ENCODE measurements at regions of chr19 and their contacts with region 1.

Region 1: DNA sequence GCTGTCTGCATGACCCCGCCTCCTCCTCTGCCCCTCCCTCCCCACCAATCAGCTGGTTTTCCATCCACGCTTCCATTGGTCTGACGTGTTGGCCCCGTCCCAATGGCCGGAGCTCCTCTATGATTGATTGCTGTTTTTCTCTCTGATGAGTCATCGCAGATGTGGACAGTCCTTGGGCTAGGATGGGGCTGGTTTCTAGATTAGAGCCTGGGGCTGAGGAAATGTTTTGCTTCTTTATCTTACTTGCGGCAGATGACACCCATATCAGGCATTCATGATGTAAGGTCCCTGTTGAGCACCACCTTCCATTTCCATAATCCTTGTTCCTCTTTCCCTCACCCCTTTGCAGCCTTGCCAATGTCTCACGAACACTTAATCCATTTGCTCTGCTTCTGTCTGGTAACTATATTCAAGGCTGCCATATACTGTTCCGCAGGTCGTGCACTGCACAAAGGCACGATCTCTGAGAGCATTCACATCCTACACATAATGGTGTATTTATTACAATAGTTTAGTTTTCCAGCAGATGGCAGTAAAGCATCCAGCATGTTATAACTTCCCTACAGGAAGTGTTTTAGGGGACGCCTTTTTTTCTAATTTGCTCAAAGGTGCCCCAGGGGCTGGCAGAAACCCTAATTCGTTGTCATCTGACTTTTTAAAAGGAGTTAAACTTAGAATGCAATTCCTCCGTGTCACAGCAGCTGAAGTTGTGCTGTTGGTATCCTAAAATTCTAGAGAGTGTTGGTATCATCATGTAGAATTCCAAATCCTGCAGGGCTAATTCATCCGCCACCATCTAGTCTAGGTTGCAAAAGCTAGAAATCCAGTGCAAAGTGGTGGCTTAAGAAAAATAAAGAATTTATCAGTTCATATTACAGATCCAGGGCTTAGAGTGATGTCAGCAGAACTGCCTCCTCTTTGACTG is 73.5 kb downstream of the MAP4K1 start:
- H3K4me3 Mint-ChIP-seq: peak overlapping the region; percentile 62
- H3K27ac Mint-ChIP-seq: peak overlapping the region; percentile 29
- H3K4me1 Mint-ChIP-seq: peaks cover 29% of the 10 kb centered on the region
- H3K27me3 Mint-ChIP-seq: peaks cover 12% of the 10 kb centered on the region

Region 2: DNA sequence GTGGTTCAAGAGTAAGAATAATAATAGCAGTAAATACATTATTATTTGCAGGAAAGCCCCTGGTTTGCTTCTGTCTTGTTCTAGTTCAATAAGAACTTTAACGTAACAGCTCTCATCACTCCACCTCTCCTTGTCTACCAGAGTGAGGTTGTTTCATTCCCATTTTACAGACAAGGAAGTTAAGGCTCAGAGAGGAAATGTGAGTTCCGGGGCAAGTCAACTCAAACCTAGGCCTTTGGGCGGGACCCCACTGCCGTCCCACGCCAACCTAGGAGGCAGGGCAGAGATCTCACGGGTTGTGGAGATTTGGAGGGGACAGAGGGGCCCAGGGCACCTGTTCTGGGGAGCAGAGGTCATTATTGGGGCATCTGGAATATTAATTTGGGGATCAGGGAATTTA is 72.0 kb after region 1 on chr19:
- intact Hi-C with region 1: no loop called
- H3K4me3 Mint-ChIP-seq: peak overlapping the region; percentile 100
- H3K27ac Mint-ChIP-seq: peak overlapping the region; percentile 99
- H3K4me1 Mint-ChIP-seq: peaks cover 52% of the 10 kb centered on the region
- H3K27me3 Mint-ChIP-seq: no peaks in the 10 kb centered on the region

Region 3: GRCh38 chr19:38634757-38635482 is 90.6 kb after region 1 on chr19:
- intact Hi-C with region 1: loop called (anchors 1 kb)
- H3K4me3 Mint-ChIP-seq: no peak overlapping the region
- H3K27ac Mint-ChIP-seq: peak overlapping the region; percentile 35
- H3K4me1 Mint-ChIP-seq: peaks cover 27% of the 10 kb centered on the region
- H3K27me3 Mint-ChIP-seq: no peaks in the 10 kb centered on the region